ENCODE measurements at regions of chr1 and their contacts with region 1.

Region 1: DNA sequence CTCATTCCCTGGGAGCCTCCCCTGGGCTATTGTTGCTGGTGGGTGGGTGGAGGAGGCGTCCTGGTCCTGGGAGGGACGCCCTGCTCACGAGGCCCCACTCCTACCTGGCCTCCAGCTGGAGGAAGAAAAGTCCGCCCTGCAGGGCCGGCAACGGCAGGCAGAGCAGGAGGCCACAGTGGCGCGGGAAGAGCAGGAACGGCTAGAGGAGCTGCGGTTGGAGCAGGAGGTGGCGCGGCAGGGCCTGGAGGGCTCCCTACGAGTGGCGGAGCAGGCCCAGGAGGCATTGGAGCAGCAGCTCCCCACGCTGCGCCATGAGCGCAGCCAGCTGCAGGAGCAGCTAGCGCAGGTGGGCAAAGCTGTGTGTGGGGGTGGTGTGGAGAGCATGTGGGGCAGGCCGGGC is 24.9 kb downstream of the CROCC start:
- DNase-seq: no peak
- ATAC-seq: no peak
- H3K4me3 ChIP-seq: no peak overlapping the region
- H3K27ac ChIP-seq: no peak overlapping the region
- H3K4me1 ChIP-seq: no peaks in the 10 kb centered on the region
- H3K27me3 ChIP-seq: no peaks in the 10 kb centered on the region
- CTCF ChIP-seq: no peak
- POLR2A ChIP-seq: no peak
- RAD21 ChIP-seq: no peak

Region 2: DNA sequence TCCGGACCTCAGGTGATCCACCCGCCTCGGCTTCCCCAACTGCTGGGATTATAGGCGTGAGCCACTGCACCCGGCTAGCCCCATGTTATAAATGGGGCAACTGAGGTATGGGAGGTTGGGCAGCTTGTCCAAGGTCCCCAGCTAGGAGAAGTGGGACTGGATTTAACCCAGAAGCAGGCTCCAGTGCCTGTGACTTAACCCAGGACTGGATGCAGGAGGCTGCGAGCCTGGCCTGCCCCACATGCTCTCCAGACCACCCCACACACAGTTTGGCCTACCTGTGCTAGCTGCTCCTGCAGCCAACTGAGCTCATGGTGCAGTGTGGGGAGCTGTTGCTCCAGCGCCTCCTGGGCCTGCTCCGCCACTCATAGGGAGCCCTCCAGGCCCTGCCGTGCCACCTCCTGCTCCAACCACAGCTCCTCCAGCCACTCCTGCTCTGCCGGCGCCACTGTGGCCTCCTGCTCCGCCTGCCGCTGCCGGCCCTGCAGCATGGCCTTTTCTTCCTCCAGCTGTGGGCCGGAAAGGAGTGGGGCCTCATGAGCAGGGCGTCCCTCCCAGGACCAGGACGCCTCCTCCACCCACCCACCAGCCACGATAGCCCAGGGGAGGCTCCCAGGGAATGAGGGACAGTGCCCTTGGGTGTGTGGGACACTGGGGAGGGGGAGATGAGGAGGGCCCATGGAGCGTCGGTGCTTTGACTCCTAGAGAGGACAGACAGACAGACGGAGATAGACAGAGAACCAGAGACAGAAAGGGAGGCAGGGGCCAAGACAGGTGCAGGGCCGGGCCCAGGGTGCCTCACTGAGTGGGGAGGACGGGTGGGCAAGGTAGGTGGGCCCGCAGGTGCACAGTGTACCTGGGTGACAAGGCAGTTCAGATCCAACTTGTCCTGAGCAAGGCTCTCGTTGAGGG is 320.9 kb before region 1 on chr1:
- CTCF ChIA-PET with region 1: interaction called, 4 read pairs
- POLR2A ChIA-PET with region 1: no interaction called
- dilution Hi-C with region 1: no loop called
- in situ Hi-C with region 1: loop called (anchors 5 kb)
- intact Hi-C with region 1: no loop called
- DNase-seq: no peak
- ATAC-seq: no peak
- H3K4me3 ChIP-seq: no peak overlapping the region
- H3K27ac ChIP-seq: no peak overlapping the region
- H3K4me1 ChIP-seq: no peaks in the 10 kb centered on the region
- H3K27me3 ChIP-seq: no peaks in the 10 kb centered on the region
- CTCF ChIP-seq: no peak
- POLR2A ChIP-seq: no peak
- RAD21 ChIP-seq: no peak

Region 3: GRCh38 chr1:16960560-16961296 is 14.1 kb after region 1 on chr1:
- CTCF ChIA-PET with region 1: interaction called, 12 read pairs
- POLR2A ChIA-PET with region 1: no interaction called
- dilution Hi-C with region 1: no loop called
- in situ Hi-C with region 1: no loop called
- intact Hi-C with region 1: no loop called
- DNase-seq: peak; percentile 75
- ATAC-seq: peak; percentile 98
- H3K4me3 ChIP-seq: peak overlapping the region; percentile 29
- H3K27ac ChIP-seq: no peak overlapping the region
- H3K4me1 ChIP-seq: peaks cover 1% of the 10 kb centered on the region; the same call in 1 of the 2 replicates
- H3K27me3 ChIP-seq: no peaks in the 10 kb centered on the region; the same call in 1 of the 2 replicates
- CTCF ChIP-seq: peak; percentile 68
- POLR2A ChIP-seq: no peak
- RAD21 ChIP-seq: peak; percentile 38; the same call in 1 of the 2 replicates

Region 4: DNA sequence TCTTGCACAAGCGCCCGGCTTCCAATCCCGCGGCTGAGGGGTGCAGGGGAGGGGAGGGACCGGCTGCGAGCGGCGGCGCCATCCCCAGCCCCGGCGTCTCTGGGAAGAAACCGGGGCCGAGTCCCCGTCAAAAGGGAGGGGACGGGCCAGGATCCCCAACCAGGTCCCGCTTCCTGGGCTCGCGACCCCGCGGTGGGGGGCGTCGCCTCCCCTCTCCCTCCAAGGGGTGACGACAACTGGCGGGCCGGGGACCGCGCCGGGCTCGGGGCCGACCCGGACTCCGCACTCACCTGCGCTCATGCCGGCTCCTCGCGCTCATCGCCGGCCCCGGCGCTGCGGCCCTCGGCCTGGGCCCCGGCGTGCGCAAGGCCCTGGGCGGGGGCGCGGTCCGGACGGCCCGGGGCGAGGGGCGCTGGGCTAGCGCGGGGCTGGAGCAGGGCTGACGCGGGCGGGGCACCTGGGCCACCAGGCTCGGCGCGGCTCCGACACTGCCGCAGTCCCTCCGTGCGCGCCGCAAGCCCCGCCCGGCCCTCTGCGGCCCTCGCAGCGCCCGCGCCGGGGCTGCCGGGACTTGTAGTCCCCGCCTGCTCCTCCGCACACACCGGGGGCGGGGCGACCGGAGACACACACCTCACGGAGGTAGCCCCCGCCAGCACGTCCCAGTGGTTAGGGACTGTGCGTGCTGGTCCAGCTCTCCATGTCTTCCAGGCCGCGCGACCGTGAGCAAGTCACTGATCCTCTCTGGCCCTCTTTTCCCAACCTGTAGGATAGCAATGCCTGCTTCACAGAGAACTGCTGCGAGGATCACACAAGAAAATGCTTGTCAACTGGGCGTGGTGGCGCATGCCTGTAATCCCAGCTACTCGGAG is 65.0 kb after region 1 on chr1 and contains the start of gene ATP13A2:
- CTCF ChIA-PET with region 1: no interaction called
- POLR2A ChIA-PET with region 1: no interaction called
- dilution Hi-C with region 1: no loop called
- in situ Hi-C with region 1: no loop called
- intact Hi-C with region 1: loop called (anchors 2 kb)
- DNase-seq: peak; percentile 56
- ATAC-seq: peak; percentile 98
- H3K4me3 ChIP-seq: peak within 1 kb of the TSS; percentile 91
- H3K27ac ChIP-seq: no peak within 1 kb of the TSS; the same call in 1 of the 2 replicates
- H3K4me1 ChIP-seq: peaks cover 10% of the 10 kb centered on the region
- H3K27me3 ChIP-seq: no peaks in the 10 kb centered on the region
- CTCF ChIP-seq: no peak
- POLR2A ChIP-seq: no peak
- RAD21 ChIP-seq: no peak
- total RNA-seq, gene ATP13A2: 3.9 and 5.7 TPM in 2 replicates

Region 5: GRCh38 chr1:17045634-17046333 is 99.1 kb after region 1 on chr1:
- CTCF ChIA-PET with region 1: interaction called, 12 read pairs
- POLR2A ChIA-PET with region 1: no interaction called
- dilution Hi-C with region 1: no loop called
- in situ Hi-C with region 1: no loop called
- intact Hi-C with region 1: loop called (anchors 1 kb)
- DNase-seq: peak; percentile 72
- ATAC-seq: peak; percentile 78
- H3K4me3 ChIP-seq: no peak overlapping the region
- H3K27ac ChIP-seq: no peak overlapping the region
- H3K4me1 ChIP-seq: no peaks in the 10 kb centered on the region
- H3K27me3 ChIP-seq: no peaks in the 10 kb centered on the region
- CTCF ChIP-seq: peak; percentile 78
- POLR2A ChIP-seq: no peak
- RAD21 ChIP-seq: peak; percentile 79

Region 6: DNA sequence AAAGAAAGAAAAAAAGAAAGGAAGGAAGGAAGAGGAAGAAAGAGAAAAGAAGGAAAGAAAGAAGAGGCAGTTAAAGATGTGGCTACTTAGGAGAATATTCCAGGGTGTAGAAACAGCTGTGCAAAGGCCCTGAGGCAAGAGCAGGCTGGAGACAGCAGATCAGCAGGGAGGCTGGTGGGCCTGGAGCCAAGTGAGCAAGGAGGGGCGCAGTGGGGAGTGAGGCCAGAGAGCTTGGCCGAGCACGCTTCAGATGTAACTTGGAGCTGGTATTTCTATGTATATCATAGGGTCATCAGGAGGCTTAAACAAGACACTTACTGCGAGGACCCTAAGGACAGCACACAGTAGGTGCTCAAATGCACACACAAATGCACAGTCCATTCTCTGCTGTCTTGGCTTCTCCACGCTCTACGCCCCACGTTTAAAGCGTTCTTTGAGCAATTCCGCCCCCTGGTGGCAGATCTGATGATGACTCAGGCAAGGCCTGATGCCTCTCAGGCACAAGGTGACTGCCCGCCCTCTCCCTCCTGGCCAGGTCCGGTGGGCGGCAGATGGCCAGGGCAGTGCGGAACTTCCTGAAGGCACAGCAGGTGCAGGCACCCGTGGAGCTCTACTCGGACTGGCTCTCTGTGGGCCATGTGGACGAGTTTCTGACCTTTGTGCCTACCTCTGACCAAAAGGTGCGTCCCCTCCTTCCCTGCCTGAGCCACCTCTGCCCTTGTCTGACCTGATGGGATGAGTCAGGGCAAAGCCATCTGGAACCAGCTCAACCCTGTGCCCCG is 290.3 kb after region 1 on chr1:
- CTCF ChIA-PET with region 1: no interaction called
- POLR2A ChIA-PET with region 1: no interaction called
- dilution Hi-C with region 1: no loop called
- in situ Hi-C with region 1: no loop called
- intact Hi-C with region 1: loop called (anchors 2 kb)
- DNase-seq: peak; percentile 75
- ATAC-seq: peak; percentile 65
- H3K4me3 ChIP-seq: no peak overlapping the region
- H3K27ac ChIP-seq: no peak overlapping the region
- H3K4me1 ChIP-seq: peaks cover 13% of the 10 kb centered on the region
- H3K27me3 ChIP-seq: peaks cover 18% of the 10 kb centered on the region
- CTCF ChIP-seq: peak; percentile 90
- POLR2A ChIP-seq: peak; percentile 58; the same call in 1 of the 2 replicates
- RAD21 ChIP-seq: peak; percentile 97

Measured in IMR-90 (cell line).